ENCODE measurements at regions of chr13 and their contacts with region 1.

Region 1: DNA sequence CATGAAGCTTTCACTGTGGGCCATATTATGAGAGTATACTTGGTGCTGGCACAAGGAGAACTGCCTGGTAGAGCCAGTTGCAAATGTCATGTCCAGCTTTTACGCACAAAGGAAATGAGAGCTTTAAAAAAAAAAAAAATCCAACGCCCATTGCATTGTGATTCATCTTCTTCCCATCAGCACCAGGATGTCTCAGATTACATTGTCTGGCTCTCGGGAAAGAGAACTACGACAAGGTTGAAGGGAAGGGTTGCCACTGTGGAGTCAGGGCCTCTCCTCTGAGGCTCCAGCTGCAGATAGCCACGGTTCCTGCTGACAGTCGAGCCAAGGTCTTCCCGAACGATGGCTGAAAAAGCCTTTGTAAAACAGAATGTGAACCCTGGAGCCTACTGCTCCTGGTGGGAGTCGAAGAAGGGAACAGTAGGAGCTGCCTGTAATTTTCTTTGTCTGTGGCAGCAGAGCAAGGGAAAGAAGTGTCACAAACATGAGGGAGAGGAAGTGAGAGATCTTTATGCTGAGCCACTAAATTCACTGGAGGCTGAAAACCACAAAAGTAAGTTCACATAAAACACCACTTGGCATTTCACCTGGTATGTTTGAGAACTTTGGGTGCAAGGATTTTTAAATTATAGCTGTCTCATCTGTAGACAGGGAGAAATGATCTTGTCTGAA is 704.7 kb downstream of the DIAPH3 start:
- DNase-seq: peak; percentile 91
- H3K4me3 ChIP-seq: peak overlapping the region in 1 of 3 experiments; percentile 8
- H3K27ac ChIP-seq: peak overlapping the region; percentile 87
- H3K4me1 ChIP-seq: peaks cover 36% of the 10 kb centered on the region
- H3K27me3 ChIP-seq: no peaks in the 10 kb centered on the region
- CTCF ChIP-seq: no peak
- POLR2A ChIP-seq: no peak

Region 2: GRCh38 chr13:59269476-59269875 is 189.6 kb before region 1 on chr13:
- CTCF ChIA-PET with region 1: no interaction called
- POLR2A ChIA-PET with region 1: no interaction called
- dilution Hi-C with region 1: no loop called
- intact Hi-C with region 1: loop called (anchors 5 kb)
- DNase-seq: no peak
- H3K4me3 ChIP-seq: no peak overlapping the region
- H3K27ac ChIP-seq: no peak overlapping the region
- H3K4me1 ChIP-seq: peaks cover 24% of the 10 kb centered on the region
- H3K27me3 ChIP-seq: no peaks in the 10 kb centered on the region
- CTCF ChIP-seq: no peak
- POLR2A ChIP-seq: no peak

Region 3: DNA sequence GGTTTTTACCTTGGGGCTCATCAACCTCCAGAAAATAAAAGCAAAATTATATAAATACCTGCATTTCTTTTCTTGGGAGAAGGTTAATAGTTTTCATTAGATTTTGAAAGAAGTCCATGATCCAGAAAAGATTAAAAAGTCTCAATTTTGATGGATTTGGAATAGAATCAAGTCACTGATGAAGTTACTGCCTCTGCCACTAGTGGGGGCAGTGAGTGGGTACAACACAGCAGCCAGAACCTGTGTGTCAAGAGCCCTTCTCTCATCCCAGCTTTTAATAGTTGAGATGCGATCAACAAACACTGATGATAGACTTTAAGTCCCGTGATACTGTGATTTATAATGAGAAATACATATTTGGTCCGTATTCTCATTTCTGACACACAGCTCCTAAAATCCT is 18.0 kb after region 1 on chr13:
- CTCF ChIA-PET with region 1: interaction called, 4 read pairs
- POLR2A ChIA-PET with region 1: no interaction called
- dilution Hi-C with region 1: no loop called
- intact Hi-C with region 1: loop called (anchors 1 kb)
- DNase-seq: peak; percentile 41
- H3K4me3 ChIP-seq: no peak overlapping the region
- H3K27ac ChIP-seq: no peak overlapping the region
- H3K4me1 ChIP-seq: peaks cover 44% of the 10 kb centered on the region
- H3K27me3 ChIP-seq: no peaks in the 10 kb centered on the region
- CTCF ChIP-seq: peak; percentile 51 to 59
- POLR2A ChIP-seq: no peak

Region 4: DNA sequence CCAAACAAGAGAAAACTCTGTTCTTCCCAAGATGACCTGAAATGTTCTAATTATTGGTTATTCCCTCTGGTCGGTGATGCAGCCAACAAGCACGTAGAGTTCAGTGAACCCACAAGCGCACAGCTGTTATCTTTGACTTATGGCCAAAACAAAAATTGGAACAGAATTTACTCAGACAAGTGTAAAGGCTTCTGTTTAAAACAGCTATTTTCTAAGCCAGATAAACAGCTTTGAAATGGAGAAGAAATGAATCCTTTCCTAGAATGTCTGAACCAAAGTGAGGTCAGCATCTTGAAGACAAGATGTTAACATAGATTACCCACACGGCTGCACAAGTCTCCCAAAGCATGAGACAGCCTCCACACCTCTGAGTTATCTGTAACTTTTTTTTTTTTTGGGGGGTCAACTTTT is 35.5 kb after region 1 on chr13:
- CTCF ChIA-PET with region 1: interaction called, 5 read pairs
- POLR2A ChIA-PET with region 1: interaction called, 8 read pairs
- dilution Hi-C with region 1: no loop called
- intact Hi-C with region 1: loop called (anchors 2 kb)
- DNase-seq: peak; percentile 93
- H3K4me3 ChIP-seq: no peak overlapping the region
- H3K27ac ChIP-seq: peak overlapping the region; percentile 75
- H3K4me1 ChIP-seq: peaks cover 70% of the 10 kb centered on the region
- H3K27me3 ChIP-seq: no peaks in the 10 kb centered on the region
- CTCF ChIP-seq: no peak
- POLR2A ChIP-seq: no peak

Region 5: DNA sequence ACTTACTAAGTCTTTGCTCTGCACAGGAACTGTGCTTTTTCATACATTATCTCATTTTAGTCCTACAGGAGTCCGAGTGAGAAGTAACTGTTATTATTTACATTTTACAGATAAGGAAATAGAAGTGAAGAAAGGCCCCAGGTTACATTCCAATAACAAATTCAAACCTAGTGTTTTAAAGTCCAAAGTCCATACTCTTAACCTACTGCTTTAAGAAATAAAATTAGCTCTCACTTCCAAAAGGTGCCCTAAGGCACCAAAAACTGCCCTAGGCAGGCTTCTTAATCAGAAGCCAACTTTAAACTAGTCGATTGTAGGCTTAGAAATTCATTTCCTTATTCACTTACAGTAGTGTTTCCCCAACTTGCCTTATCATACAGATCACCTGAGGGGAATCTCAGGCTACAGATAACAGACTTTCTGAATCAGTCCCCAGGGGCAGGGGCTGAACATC is 148.8 kb after region 1 on chr13:
- CTCF ChIA-PET with region 1: no interaction called
- POLR2A ChIA-PET with region 1: no interaction called
- dilution Hi-C with region 1: no loop called
- intact Hi-C with region 1: no loop called
- DNase-seq: no peak
- H3K4me3 ChIP-seq: no peak overlapping the region
- H3K27ac ChIP-seq: no peak overlapping the region
- H3K4me1 ChIP-seq: no peaks in the 10 kb centered on the region
- H3K27me3 ChIP-seq: no peaks in the 10 kb centered on the region
- CTCF ChIP-seq: no peak
- POLR2A ChIP-seq: no peak

Region 6: DNA sequence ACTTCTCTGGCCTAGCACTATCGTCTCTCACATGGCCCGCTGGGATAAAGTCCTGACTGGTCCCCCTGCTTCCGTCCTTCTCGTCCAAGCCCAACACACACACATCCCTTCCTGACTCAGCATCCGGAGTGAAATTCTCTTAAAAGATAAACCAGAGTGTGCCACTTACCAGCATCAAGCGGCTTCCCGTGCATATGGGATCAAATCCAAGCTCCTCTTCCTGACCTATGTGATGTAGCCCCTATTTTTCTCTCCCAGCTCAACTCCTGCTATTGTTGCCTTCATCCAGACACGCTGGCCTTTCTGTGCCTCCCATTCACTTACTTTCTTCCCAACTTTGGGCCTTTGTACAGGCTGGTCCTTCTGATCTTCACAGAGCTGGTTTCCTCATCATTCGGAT is 174.2 kb after region 1 on chr13:
- CTCF ChIA-PET with region 1: no interaction called
- POLR2A ChIA-PET with region 1: no interaction called
- dilution Hi-C with region 1: no loop called
- intact Hi-C with region 1: loop called (anchors 5 kb)
- DNase-seq: peak; percentile 81
- H3K4me3 ChIP-seq: no peak overlapping the region
- H3K27ac ChIP-seq: peak overlapping the region; percentile 58
- H3K4me1 ChIP-seq: peaks cover 27% of the 10 kb centered on the region
- H3K27me3 ChIP-seq: no peaks in the 10 kb centered on the region
- CTCF ChIP-seq: no peak
- POLR2A ChIP-seq: no peak

Region 7: DNA sequence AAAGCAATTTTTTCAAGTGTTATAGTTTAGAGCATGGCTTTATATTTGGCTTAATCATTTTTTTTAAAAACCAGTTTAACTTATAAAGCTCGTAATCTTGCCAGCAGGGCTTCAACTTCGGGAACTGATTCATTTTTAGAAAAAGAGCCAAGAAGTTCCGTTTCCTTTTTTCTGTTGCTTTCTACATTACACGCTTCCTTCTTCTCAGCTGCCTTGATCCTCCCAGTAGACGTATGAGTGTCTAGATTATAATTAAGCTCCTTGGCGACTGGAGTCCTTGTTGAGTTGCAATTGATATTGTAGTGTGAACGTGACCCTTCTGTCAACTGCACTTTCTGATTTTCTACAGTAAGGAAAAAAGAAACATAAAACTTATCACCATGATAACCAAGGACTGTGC is 207.5 kb after region 1 on chr13:
- CTCF ChIA-PET with region 1: interaction called, 6 read pairs
- POLR2A ChIA-PET with region 1: no interaction called
- dilution Hi-C with region 1: no loop called
- intact Hi-C with region 1: loop called (anchors 2 kb)
- DNase-seq: peak; percentile 93
- H3K4me3 ChIP-seq: peak overlapping the region in 1 of 3 experiments; percentile 3
- H3K27ac ChIP-seq: peak overlapping the region; percentile 69
- H3K4me1 ChIP-seq: peaks cover 16% of the 10 kb centered on the region
- H3K27me3 ChIP-seq: no peaks in the 10 kb centered on the region
- CTCF ChIP-seq: no peak
- POLR2A ChIP-seq: no peak

Measured in endothelial cell of umbilical vein (primary cell).